Activated T-helper 2 cell treated with anti-CD3 and anti-CD28 coated beads, Interferon-gamma antibody, Interleukin-2, Interleukin-4, amounts not matched to agents 10 μg/mL and 5 μg/mL and 100 μg/mL, durations not matched to agents 14 hours and 24 hours and 36 hours (primary cell): ENCODE measurements at regions of chr1 and their contacts with region 1.

Region 1: GRCh38 chr1:221435504-221435904 is 306.4 kb downstream of the DUSP10 start:
- DNase-seq: no peak
- H3K4me3 Mint-ChIP-seq: no peak overlapping the region
- H3K27ac Mint-ChIP-seq: no peak overlapping the region
- H3K4me1 Mint-ChIP-seq: peaks cover 31% of the 10 kb centered on the region
- H3K27me3 Mint-ChIP-seq: peaks cover 9% of the 10 kb centered on the region

Region 2: GRCh38 chr1:220873868-220874655 is 561.4 kb before region 1 on chr1:
- intact Hi-C with region 1: loop called (anchors 1 kb)
- DNase-seq: no peak
- H3K4me3 Mint-ChIP-seq: no peak overlapping the region
- H3K27ac Mint-ChIP-seq: no peak overlapping the region
- H3K4me1 Mint-ChIP-seq: peaks cover 19% of the 10 kb centered on the region
- H3K27me3 Mint-ChIP-seq: peaks cover 52% of the 10 kb centered on the region

Region 3: GRCh38 chr1:221069178-221069903 is 366.2 kb before region 1 on chr1:
- intact Hi-C with region 1: loop called (anchors 1 kb)
- DNase-seq: no peak
- H3K4me3 Mint-ChIP-seq: no peak overlapping the region
- H3K27ac Mint-ChIP-seq: peak overlapping the region; percentile 94
- H3K4me1 Mint-ChIP-seq: peaks cover 40% of the 10 kb centered on the region
- H3K27me3 Mint-ChIP-seq: no peaks in the 10 kb centered on the region

Region 4: GRCh38 chr1:221708987-221709386 is 273.5 kb after region 1 on chr1:
- intact Hi-C with region 1: loop called (anchors 1 kb)
- DNase-seq: peak; percentile 41
- H3K4me3 Mint-ChIP-seq: peak overlapping the region; percentile 33
- H3K27ac Mint-ChIP-seq: peak overlapping the region; percentile 98
- H3K4me1 Mint-ChIP-seq: peaks cover 65% of the 10 kb centered on the region
- H3K27me3 Mint-ChIP-seq: no peaks in the 10 kb centered on the region

Region 5: DNA sequence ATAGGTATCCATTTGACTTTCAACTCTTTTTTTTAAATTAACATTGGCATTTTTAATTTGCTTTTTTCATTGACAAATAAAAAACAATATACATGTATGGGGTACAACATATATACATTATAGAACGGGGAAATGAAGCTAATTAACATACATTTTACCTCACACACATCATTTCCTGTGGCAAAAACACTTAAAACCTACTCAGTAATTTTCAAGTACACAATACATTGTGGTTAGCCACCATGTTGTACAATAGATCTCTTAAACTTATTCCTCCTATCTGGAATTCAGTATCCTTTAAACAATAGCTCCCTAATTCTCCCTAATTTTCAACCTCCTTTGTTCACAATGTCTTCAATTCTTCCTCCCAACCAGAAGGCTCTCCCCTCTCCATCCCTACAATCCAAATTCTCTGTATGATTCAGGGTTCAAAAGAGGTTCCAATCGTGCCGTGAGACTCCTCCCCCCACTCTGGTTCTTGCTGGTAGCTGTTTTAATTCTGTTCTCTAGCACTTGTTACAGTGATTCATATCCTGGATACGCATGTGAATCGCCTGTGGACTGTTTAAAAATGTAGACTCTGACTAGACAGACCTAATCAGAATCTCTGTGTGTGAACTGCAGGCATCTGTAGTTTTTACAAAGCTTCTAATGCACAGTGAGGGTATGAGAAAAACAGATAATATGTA is 394.0 kb after region 1 on chr1:
- intact Hi-C with region 1: loop called (anchors 10 kb)
- DNase-seq: peak; percentile 40
- H3K4me3 Mint-ChIP-seq: peak overlapping the region; percentile 67
- H3K27ac Mint-ChIP-seq: peak overlapping the region; percentile 97
- H3K4me1 Mint-ChIP-seq: peaks cover 70% of the 10 kb centered on the region
- H3K27me3 Mint-ChIP-seq: no peaks in the 10 kb centered on the region

Region 6: GRCh38 chr1:222643938-222644635 is 1208.6 kb after region 1 on chr1:
- intact Hi-C with region 1: loop called (anchors 10 kb)
- DNase-seq: peak; percentile 97
- H3K4me3 Mint-ChIP-seq: peak overlapping the region; percentile 99
- H3K27ac Mint-ChIP-seq: peak overlapping the region; percentile 94
- H3K4me1 Mint-ChIP-seq: peaks cover 18% of the 10 kb centered on the region
- H3K27me3 Mint-ChIP-seq: no peaks in the 10 kb centered on the region